ENCODE measurements at regions of chr6 and their contacts with region 1.

Region 1: GRCh38 chr6:73129653-73130443 is 95.4 kb downstream of the KHDC1L start:
- DNase-seq: peak; percentile 83
- H3K4me3 ChIP-seq: no peak overlapping the region
- H3K27ac ChIP-seq: no peak overlapping the region
- H3K4me1 ChIP-seq: peaks cover 18% of the 10 kb centered on the region
- H3K27me3 ChIP-seq: no peaks in the 10 kb centered on the region
- CTCF ChIP-seq: peak; percentile 100

Region 2: GRCh38 chr6:72616406-72617015 is 513.3 kb before region 1 on chr6:
- CTCF ChIA-PET with region 1: interaction called, 22 read pairs
- dilution Hi-C with region 1: no loop called
- in situ Hi-C with region 1: loop called (anchors 10 kb)
- intact Hi-C with region 1: loop called (anchors 1 kb)
- DNase-seq: peak; percentile 12
- H3K4me3 ChIP-seq: no peak overlapping the region
- H3K27ac ChIP-seq: no peak overlapping the region
- H3K4me1 ChIP-seq: peaks cover 9% of the 10 kb centered on the region
- H3K27me3 ChIP-seq: no peaks in the 10 kb centered on the region
- CTCF ChIP-seq: peak; percentile 56 to 65

Region 3: GRCh38 chr6:72622094-72622940 is 507.5 kb before region 1 on chr6:
- CTCF ChIA-PET with region 1: interaction called, 22 read pairs
- dilution Hi-C with region 1: loop called (anchors 5 kb)
- in situ Hi-C with region 1: loop called (anchors 10 kb)
- intact Hi-C with region 1: loop called (anchors 1 kb)
- DNase-seq: peak; percentile 46
- H3K4me3 ChIP-seq: peak overlapping the region; percentile 65 to 72 (median 72)
- H3K27ac ChIP-seq: peak overlapping the region; percentile 50
- H3K4me1 ChIP-seq: peaks cover 21% of the 10 kb centered on the region
- H3K27me3 ChIP-seq: no peaks in the 10 kb centered on the region
- CTCF ChIP-seq: peak in 1 of 2 donors; percentile 35

Region 4: GRCh38 chr6:72643214-72643613 is 486.6 kb before region 1 on chr6:
- CTCF ChIA-PET with region 1: no interaction called
- dilution Hi-C with region 1: no loop called
- in situ Hi-C with region 1: no loop called
- intact Hi-C with region 1: loop called (anchors 1 kb)
- DNase-seq: no peak
- H3K4me3 ChIP-seq: no peak overlapping the region
- H3K27ac ChIP-seq: no peak overlapping the region
- H3K4me1 ChIP-seq: peaks cover 15% of the 10 kb centered on the region
- H3K27me3 ChIP-seq: no peaks in the 10 kb centered on the region
- CTCF ChIP-seq: peak in 1 of 2 donors; percentile 52

Region 5: DNA sequence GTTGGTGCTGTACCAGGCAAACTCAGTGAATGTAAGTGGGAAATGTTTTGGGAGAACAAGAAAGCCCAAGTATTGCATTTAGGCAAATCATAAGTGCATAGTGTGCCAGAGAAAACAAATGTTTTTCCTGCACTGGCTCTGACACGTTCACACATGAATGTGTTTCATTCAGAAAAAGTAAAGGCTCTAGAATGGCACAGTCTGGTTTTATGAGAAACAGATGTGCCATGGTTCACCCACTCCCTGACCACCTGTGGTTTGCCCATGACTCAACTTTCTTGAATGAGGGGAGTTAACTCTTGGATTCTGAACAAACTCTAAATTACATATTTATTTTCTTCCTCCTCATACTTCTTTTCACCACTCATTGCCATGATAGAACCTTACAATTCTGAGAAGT is 381.1 kb before region 1 on chr6:
- CTCF ChIA-PET with region 1: no interaction called
- dilution Hi-C with region 1: no loop called
- in situ Hi-C with region 1: no loop called
- intact Hi-C with region 1: loop called (anchors 2 kb)
- DNase-seq: peak; percentile 98
- H3K4me3 ChIP-seq: no peak overlapping the region
- H3K27ac ChIP-seq: no peak overlapping the region
- H3K4me1 ChIP-seq: peaks cover 28% of the 10 kb centered on the region
- H3K27me3 ChIP-seq: no peaks in the 10 kb centered on the region
- CTCF ChIP-seq: no peak

Region 6: DNA sequence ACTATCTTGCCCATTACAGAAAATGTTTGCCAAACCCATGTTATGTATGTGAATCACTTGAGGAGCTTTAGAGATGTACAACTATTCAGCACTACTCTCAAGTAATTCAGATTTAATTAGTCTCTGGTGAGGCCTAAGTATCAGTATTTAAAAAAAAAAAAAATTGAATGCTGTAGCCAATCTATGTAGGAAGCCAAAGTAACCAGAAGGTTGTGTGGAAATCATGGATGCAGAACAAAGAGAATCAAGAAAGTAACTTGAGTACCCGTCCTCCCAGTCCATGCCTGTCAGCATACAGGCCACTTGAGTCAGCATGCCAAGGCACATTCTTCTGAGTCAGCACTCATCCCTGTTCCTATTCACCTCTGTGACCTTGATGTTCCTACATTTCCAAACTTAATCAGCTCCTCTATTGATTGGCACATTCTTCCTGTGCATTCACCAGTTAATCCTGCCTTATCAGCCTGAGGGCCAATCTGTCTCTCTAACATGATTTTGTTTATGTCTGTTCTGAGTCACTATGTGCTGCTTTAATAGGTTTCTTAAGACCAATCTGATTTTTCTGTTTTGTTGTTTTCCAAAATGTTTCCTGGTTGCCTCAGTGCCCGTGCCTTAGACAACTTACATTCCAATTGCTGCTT is 342.3 kb before region 1 on chr6:
- CTCF ChIA-PET with region 1: no interaction called
- dilution Hi-C with region 1: no loop called
- in situ Hi-C with region 1: no loop called
- intact Hi-C with region 1: loop called (anchors 1 kb)
- DNase-seq: peak; percentile 94
- H3K4me3 ChIP-seq: peak overlapping the region in 1 of 3 experiments; percentile 17
- H3K27ac ChIP-seq: peak overlapping the region; percentile 99
- H3K4me1 ChIP-seq: peaks cover 47% of the 10 kb centered on the region
- H3K27me3 ChIP-seq: no peaks in the 10 kb centered on the region
- CTCF ChIP-seq: no peak

Measured in mammary epithelial cell (primary cell).